Naive thymus-derived CD4-positive, alpha-beta T cell (primary cell): ENCODE measurements at regions of chr7 and their contacts with region 1.

Region 1: DNA sequence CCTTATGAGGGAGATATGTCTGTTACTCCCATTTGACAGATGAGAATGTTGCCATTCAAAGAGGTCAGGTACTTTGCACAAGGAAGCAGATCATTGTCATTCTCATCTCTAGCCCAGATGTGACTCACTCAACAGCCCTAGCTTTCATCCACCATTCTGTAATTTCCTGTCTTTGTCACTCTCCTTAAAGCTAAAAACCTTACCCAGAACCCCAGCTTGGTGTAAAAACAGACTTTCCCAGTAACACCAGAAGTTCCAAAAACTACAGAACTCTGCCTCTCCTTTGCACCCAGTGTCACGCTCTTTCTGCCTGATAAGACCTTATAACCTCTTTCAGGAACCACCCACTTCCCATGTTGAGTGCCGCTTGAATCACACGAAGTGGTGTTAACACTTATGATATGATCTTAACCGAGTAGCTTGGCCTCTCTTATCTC is 89.1 kb upstream of the SP4 start:
- DNase-seq: peak in 5 of 9 donors; percentile 4 to 58 (median 10)
- ATAC-seq: peak; percentile 95
- H3K4me3 ChIP-seq: peak overlapping the region; percentile 33
- H3K4me3 Mint-ChIP-seq: peak overlapping the region; percentile 9 to 72 (median 50)
- H3K27ac ChIP-seq: peak overlapping the region; percentile 32
- H3K27ac Mint-ChIP-seq: peak overlapping the region; percentile 30 to 95 (median 75)
- H3K4me1 ChIP-seq: peaks cover 7 to 15% of the 10 kb centered on the region in 2 donors
- H3K4me1 Mint-ChIP-seq: peaks cover 7 to 70% (median 13%) of the 10 kb centered on the region in 7 donors
- H3K27me3 ChIP-seq: no peaks in the 10 kb centered on the region
- H3K27me3 Mint-ChIP-seq: no peaks in the 10 kb centered on the region

Region 2: DNA sequence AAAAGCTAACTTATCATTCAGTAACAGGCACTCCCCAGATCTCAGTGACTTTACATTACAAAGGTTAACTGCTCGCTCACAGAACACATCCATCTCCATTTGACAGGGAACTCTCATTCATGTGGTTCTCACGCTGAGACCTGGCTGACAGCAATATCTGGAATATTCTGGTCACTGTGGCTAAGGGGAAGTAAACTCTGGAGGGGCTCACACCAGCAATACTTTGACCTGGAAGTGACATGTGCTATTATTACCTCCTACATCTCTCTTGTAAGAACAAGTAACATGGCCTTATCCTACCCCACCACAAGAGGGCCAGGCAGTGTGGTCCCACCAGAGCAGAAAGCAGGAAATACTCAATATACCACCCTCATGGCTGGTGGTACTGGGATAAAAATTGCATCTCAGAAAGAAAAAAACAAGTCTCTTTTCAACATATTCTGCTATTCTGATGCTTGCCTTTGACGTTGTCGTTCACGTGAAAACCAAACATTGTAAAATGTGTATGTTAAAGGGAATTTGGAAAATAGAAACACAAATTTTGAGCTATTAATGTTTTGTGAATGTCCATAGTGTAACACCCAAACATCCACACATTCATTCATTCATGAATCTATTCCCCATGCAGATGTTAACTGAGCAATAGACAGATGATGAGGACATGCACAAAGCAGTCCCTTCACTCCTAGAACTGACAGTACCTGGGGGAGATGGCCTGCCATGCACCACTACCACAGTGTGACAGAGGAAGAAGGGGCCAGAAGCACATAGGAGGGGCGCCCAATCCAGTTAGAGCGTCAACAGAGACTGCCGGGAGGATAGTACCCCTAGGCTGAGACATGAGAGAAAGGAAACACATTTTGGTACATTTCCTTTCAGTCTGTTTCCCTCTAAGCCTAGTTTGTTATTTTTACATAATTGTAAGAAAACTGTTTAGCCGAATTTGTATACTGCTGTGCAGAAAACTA is 76.8 kb before region 1 on chr7:
- CTCF ChIA-PET with region 1: interaction called, 3 read pairs
- POLR2A ChIA-PET with region 1: no interaction called
- intact Hi-C with region 1: loop called in 1 of 2 experiments (anchors 5 kb)
- DNase-seq: peak in 7 of 9 donors; percentile 20 to 45 (median 27)
- ATAC-seq: peak; percentile 74
- H3K4me3 ChIP-seq: no peak overlapping the region
- H3K4me3 Mint-ChIP-seq: peak overlapping the region in 1 of 10 donors; percentile 49
- H3K27ac ChIP-seq: no peak overlapping the region
- H3K27ac Mint-ChIP-seq: peak overlapping the region in 2 of 9 donors; percentile 60 to 63
- H3K4me1 ChIP-seq: peaks cover 0 to 2% of the 10 kb centered on the region in 2 donors
- H3K4me1 Mint-ChIP-seq: peaks cover 0 to 21% (median 9%) of the 10 kb centered on the region in 7 donors
- H3K27me3 ChIP-seq: no peaks in the 10 kb centered on the region
- H3K27me3 Mint-ChIP-seq: peaks cover 3 to 10% (median 6%) of the 10 kb centered on the region in 5 donors

Region 3: GRCh38 chr7:21300692-21301091 is 38.1 kb before region 1 on chr7:
- CTCF ChIA-PET with region 1: interaction called, 3 read pairs
- POLR2A ChIA-PET with region 1: no interaction called
- intact Hi-C with region 1: loop called in 1 of 2 experiments (anchors 5 kb)
- DNase-seq: peak in 3 of 9 donors; percentile 1 to 7 (median 3)
- ATAC-seq: no peak
- H3K4me3 ChIP-seq: no peak overlapping the region
- H3K4me3 Mint-ChIP-seq: no peak overlapping the region
- H3K27ac ChIP-seq: no peak overlapping the region
- H3K27ac Mint-ChIP-seq: no peak overlapping the region
- H3K4me1 ChIP-seq: no peaks in the 10 kb centered on the region
- H3K4me1 Mint-ChIP-seq: peaks cover 0 to 12% (median 0%) of the 10 kb centered on the region in 7 donors
- H3K27me3 ChIP-seq: no peaks in the 10 kb centered on the region
- H3K27me3 Mint-ChIP-seq: peaks cover 0 to 3% (median 0%) of the 10 kb centered on the region in 5 donors

Region 4: DNA sequence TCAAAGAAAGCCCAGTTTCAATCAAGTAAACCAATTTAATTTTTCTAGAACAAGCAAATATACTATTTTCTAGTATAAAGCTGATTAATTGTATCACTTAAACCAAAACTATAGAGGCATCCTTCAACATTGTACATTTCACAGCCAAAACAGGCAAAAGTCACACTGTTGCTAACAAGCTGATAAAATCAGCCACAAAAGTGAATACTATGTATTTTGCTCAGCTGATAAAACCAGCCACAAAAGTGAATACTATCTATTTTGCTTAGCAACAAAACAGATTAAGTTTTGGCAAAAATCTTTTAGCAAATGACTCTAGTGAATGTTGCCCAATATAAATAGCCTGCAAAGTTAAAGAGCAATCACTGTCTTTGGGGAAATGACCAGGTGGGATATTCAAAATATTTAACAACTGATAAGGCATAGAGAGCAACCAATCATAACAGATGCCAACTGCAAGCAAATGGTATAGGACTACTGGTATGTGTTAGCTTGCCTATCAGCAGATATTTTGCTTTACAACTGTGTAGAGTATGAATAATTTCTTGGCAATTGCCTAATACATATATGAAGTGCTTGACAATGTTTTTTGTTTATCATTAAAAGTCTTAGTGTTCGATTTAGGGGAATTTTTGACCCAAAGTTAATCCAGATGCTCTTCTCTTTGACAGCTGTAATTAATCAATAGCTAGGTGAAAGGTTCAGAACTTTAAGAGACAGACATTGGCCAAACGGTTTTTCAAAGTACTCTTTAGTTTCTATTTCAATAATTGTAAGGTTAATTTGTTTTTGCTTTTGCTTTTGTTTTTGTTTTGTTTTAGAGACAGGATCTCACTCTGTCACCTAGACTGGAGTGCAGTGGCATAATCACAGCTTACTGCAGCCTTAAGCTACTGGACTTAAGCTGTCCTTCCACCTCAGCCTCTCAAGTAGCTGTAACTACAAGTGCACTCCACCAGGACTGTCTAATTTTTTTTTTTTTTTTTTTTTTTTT is 44.8 kb after region 1 on chr7:
- CTCF ChIA-PET with region 1: no interaction called
- POLR2A ChIA-PET with region 1: no interaction called
- intact Hi-C with region 1: loop called in 1 of 2 experiments (anchors 2 kb)
- DNase-seq: no peak
- ATAC-seq: peak; percentile 69
- H3K4me3 ChIP-seq: no peak overlapping the region
- H3K4me3 Mint-ChIP-seq: peak overlapping the region in 2 of 10 donors; percentile 59 to 63
- H3K27ac ChIP-seq: no peak overlapping the region
- H3K27ac Mint-ChIP-seq: peak overlapping the region in 2 of 9 donors; percentile 12 to 87
- H3K4me1 ChIP-seq: peaks cover 0 to 13% of the 10 kb centered on the region in 2 donors
- H3K4me1 Mint-ChIP-seq: peaks cover 0 to 37% (median 6%) of the 10 kb centered on the region in 7 donors
- H3K27me3 ChIP-seq: no peaks in the 10 kb centered on the region
- H3K27me3 Mint-ChIP-seq: no peaks in the 10 kb centered on the region